ENCODE measurements at regions of chr16 and their contacts with region 1.

Region 1: DNA sequence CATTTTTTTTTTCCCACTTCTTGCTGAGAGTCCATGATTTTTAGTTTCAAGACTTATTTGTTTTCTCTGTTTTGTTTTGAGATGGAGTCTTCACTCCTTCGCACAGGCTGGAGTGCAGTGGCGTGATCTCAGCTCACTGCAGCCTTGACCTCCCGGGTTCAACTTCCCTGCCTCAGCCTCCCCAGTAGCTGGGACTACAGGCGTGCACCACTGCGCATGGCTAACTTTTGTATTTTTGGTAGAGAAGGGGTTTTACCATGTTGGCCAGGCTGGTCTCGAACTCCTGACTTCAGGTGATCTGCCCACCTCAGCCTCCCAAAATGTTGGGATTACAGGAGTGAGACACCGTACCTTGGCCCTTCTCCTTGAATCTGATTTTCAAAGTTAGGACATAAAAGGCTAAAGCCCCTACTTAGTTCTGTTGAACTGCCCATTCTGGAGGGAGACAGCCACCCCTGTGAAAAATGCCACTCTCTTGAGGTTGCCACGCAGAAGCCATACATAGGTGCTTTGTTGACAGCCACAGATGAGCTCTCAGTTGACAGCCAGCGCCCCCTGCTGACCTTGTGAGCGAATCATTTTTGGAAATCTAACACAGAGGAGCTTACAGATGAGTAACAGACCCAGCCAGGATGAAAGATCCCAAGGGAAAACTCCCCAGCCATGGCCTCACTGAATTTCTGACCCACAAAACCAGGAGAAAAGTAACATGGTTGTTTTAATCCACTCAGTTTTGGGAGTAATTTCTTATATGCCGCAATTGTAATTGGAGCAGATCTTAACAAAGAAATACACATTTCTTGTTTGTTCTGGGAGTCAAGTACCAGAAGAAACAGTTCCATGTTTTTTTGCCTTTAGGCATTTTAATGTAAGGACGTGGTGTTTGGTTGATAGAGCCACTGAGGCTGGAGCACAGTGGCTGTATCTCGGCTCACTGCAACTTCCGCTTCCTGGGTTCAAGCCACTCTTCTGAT is 38.8 kb downstream of the PKD1L3 start:
- DNase-seq: peak; percentile 63
- ATAC-seq: peak; percentile 99
- H3K4me3 ChIP-seq: no peak overlapping the region
- H3K27ac ChIP-seq: no peak overlapping the region
- H3K4me1 ChIP-seq: no peaks in the 10 kb centered on the region
- H3K27me3 ChIP-seq: no peaks in the 10 kb centered on the region
- CTCF ChIP-seq: peak; percentile 87

Region 2: GRCh38 chr16:71628810-71629209 is 332.5 kb before region 1 on chr16:
- CTCF ChIA-PET with region 1: no interaction called
- POLR2A ChIA-PET with region 1: no interaction called
- in situ Hi-C with region 1: no loop called
- intact Hi-C with region 1: no loop called
- DNase-seq: no peak
- ATAC-seq: no peak
- H3K4me3 ChIP-seq: no peak overlapping the region
- H3K27ac ChIP-seq: no peak overlapping the region
- H3K4me1 ChIP-seq: no peaks in the 10 kb centered on the region
- H3K27me3 ChIP-seq: peaks cover 2% of the 10 kb centered on the region; the same call in 1 of the 2 replicates
- CTCF ChIP-seq: no peak

Region 3: DNA sequence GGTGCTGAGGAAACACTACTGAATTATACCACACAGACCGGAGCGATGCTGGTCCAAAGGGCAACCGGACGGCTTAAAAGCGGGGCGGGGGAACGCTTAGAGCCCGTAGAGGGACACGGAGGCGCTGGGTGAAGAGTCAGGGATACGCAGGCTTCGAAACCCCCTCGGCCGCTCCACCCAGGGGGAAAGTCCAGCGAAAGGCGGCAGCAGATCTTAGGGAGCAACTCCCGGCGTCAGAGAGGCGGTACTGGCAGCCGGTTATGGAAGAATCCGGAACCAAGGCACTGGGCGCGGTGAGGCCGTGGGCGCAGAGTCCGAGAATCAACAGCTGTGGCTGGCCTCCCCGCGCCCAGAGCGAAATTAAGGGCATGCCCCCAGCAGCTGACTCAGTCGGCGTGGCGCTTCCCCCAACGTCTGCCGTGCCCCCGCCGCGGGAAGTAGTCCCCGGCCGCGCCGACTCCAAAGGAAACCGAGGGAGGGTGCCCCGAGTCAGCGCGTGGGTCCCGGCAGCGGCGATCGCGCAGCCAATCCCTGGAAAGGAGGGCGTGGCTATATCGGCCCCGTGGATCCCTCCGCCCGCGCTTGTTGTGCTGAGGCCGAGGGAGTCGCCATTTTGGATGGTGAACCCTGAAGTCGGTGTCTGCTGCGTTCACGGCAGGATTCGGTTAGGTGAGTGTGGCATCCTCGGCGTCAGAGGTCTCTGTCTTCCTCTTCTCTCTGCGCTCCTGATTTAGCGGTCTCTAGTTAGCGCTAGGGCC is 66.3 kb before region 1 on chr16 and contains the start of gene IST1:
- CTCF ChIA-PET with region 1: interaction called, 3 read pairs
- POLR2A ChIA-PET with region 1: interaction called, 12 read pairs
- in situ Hi-C with region 1: no loop called
- intact Hi-C with region 1: no loop called
- DNase-seq: peak; percentile 79
- ATAC-seq: peak; percentile 94
- H3K4me3 ChIP-seq: peak within 1 kb of the TSS; percentile 83 to 87
- H3K27ac ChIP-seq: peak within 1 kb of the TSS; percentile 96
- H3K4me1 ChIP-seq: peaks cover 3% of the 10 kb centered on the region; the same call in 1 of the 2 replicates
- H3K27me3 ChIP-seq: no peaks in the 10 kb centered on the region
- CTCF ChIP-seq: no peak
- total RNA-seq, gene IST1: 173 TPM

Region 4: DNA sequence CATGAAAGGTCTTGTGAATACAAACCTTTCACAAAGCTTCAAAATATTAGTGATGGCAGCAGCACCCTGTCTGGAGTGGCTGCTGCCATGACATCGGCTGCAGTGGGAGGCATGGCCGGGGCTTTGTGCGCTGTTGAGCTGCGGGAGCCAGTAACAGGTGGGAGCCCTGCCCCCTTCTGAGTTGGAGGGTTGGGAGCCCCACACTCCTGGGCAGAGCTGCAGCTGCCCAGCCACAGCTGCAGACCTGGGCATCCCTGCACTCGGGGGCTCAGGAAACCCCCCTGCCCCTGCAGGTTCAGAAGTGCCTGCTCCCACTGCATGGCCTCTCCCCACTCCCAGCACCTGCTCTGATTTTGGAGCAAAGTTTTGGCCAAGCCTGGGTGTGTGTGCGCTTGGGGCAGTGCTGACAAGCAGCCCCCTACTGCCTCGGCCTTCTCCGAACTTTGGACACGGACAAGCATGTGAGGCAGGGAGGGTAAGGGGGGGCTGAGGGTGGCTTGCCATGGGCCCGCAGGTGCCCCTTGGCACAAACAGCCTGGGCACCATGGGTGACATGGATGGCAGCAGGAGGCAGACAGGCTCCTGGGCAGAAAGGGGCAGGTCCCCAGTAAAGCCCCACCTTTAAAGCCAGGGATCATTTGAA is 23.4 kb before region 1 on chr16:
- CTCF ChIA-PET with region 1: no interaction called
- POLR2A ChIA-PET with region 1: no interaction called
- in situ Hi-C with region 1: no loop called
- intact Hi-C with region 1: loop called (anchors 1 kb)
- DNase-seq: no peak
- ATAC-seq: no peak
- H3K4me3 ChIP-seq: no peak overlapping the region
- H3K27ac ChIP-seq: no peak overlapping the region
- H3K4me1 ChIP-seq: no peaks in the 10 kb centered on the region
- H3K27me3 ChIP-seq: no peaks in the 10 kb centered on the region
- CTCF ChIP-seq: no peak

Region 5: DNA sequence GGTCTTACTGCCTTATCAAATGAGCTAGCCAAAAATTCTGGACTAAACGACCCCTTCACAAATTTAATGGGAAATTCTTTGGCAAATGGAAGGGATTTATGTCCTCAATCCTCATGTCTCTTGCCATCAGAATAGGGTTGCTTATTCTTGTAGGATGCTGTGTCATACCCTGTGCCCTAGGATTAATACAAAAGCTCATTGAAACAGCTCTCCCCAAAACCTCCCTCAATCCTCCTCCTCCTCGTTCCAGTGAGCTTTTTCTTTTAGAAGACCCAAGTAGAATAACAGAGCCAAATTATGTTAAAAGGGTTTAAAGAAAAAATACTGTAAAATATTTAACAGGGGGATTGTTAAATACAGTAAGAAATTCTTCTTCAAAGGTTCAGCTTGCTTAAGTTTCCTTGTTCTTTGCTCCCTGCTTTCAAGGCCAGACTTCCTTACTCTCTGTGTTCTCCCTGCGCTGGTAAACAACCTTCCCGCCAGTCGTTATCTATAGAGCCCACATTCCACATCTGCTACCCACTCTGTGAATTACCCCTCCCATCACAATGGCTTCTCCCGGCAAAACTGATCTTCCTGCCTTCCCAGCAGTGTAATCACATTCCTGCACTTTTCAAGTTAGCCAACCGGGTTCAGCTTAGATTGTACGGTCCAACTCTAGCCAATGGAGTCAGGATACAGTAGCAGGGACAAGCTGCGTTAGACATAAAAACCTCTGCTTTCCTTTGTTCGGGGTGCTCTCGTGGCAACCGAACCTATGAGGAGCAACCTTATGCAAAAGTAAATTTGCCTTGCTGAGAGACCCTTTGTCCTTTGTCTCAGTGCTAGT is 111.4 kb after region 1 on chr16:
- CTCF ChIA-PET with region 1: no interaction called
- POLR2A ChIA-PET with region 1: no interaction called
- in situ Hi-C with region 1: no loop called
- intact Hi-C with region 1: no loop called
- DNase-seq: no peak
- ATAC-seq: no peak
- H3K4me3 ChIP-seq: no peak overlapping the region
- H3K27ac ChIP-seq: no peak overlapping the region
- H3K4me1 ChIP-seq: no peaks in the 10 kb centered on the region
- H3K27me3 ChIP-seq: no peaks in the 10 kb centered on the region
- CTCF ChIP-seq: no peak

Region 6: DNA sequence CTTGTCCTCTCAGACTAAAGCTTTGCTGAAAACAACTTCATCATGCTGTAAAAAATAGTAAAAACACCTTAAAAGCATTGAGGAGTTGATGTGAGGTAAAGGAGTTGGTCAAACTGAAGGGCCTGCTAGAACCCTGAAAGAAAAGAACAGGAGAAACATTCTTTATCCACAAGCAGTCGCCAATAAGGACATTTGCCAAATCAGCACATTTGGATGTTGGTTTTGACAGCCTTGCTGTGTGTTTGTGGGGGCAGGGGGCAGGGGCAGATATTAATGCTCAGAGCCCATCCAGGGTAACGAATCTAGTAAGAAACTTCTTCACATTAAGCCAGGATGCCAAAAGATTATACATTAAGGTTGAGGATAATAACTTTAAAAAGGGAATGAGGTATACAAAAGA is 1486.5 kb after region 1 on chr16:
- CTCF ChIA-PET with region 1: no interaction called
- POLR2A ChIA-PET with region 1: no interaction called
- in situ Hi-C with region 1: no loop called
- intact Hi-C with region 1: no loop called
- DNase-seq: no peak
- ATAC-seq: no peak
- H3K4me3 ChIP-seq: no peak overlapping the region
- H3K27ac ChIP-seq: no peak overlapping the region
- H3K4me1 ChIP-seq: no peaks in the 10 kb centered on the region
- H3K27me3 ChIP-seq: no peaks in the 10 kb centered on the region
- CTCF ChIP-seq: no peak